Activated naive CD4-positive, alpha-beta T cell treated with anti-CD3 and anti-CD28 coated beads for 36 hours (primary cell): ENCODE measurements at regions of chr3 and their contacts with region 1.

Region 1: DNA sequence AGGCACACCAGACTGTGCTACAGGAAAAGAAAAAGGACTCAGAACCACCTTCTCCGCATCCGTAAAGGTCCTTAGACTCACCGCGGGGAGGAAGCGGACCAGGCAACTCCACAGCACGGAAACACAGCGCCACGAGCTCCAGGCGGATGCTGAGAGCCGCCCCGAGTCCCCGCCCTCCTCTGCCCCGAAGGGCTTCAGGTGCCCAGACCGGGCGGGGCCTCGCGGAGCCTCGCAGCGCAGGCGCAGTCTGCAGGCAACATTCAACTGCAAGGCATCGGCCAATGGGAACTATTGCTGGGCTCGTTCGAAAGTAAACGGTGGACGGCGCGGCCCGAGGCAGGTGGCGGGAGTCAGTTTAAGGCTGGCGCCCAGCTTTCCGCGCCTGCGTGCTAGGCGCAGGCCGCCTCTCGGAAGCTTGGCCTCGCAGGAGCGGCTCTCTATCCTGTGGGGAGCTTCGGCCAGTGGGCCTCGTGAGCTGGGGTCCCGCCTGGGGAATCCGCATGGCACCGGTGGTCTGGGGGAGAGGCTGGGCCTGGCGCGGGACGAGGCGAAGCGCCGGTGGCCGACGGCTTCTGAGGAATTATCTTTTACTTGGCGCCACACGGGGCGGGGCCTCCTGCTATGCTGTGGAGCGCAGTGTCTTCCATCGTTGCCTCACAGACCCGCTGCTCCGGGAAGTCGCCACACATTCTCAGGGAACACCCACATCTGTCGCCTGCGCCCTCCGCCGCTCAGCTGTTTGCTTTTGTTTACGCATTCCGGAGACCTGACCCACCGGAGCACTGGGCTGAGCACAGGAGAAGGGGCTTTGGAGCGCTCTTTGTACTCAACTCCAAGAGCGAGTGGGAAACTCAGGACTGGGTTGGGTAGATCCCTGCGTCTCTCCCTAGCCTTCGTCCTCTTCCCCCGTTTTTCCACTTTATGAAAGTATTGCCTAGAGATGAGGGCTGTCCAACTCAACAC is at the start of gene TRIM59:
- DNase-seq: peak; percentile 98
- H3K4me3 Mint-ChIP-seq: peak within 1 kb of the TSS; percentile 91
- H3K27ac Mint-ChIP-seq: peak within 1 kb of the TSS; percentile 90
- H3K4me1 Mint-ChIP-seq: peaks cover 26% of the 10 kb centered on the region
- H3K27me3 Mint-ChIP-seq: no peaks in the 10 kb centered on the region
- total RNA-seq, gene TRIM59: 25.8 TPM

Region 2: GRCh38 chr3:158808702-158809101 is 1641.2 kb before region 1 on chr3:
- CTCF ChIA-PET with region 1: no interaction called
- intact Hi-C with region 1: loop called (anchors 5 kb)
- DNase-seq: peak; percentile 9
- H3K4me3 Mint-ChIP-seq: no peak overlapping the region
- H3K27ac Mint-ChIP-seq: no peak overlapping the region
- H3K4me1 Mint-ChIP-seq: peaks cover 11% of the 10 kb centered on the region
- H3K27me3 Mint-ChIP-seq: no peaks in the 10 kb centered on the region

Region 3: DNA sequence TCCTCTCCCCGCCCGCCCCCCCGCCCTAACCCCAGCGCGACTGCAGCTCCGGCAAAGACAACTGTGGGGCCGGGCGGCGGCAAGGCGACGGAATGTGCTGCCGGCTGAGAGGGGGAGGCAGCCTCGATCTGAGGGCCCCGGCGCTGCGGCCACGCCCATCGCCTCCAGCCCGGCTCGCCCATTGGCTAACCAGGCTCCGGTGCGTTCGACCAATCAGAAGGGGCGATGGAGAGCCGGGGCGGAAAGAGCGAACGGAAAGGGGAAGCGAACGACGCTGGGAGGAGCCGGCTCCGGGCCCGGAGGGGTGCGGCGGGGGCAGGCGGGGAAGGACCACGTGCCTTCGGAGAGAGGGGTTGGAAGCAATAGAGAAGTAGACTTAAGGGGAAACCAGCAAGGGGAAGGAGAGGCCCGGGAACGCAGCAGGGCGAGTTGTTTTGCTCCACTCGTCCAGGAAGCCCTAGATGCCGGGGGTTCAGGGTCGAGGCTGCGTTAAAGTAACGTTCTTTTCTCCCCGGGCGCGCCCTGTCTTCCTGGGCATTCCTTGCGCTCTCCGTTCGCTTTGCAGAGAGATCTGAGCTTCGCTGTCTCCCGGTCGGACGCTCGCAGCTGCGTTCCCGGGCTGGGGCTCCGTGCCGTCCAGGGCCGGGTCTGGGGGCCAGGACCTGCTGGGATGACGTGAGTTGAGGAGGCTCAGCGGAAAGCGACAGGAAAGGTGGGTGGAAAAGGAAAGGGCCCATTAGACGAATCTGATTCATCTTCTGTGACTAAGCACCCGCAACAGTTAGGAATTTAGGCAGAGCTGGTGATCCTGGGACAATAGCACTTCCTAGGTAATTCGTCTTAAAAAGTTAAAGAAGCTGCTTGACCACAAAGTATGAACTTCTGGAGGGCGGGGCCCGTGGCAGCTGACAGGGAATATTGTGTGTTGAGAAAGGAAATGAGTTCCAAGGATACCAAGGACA is 115.8 kb after region 1 on chr3 and contains the start of gene KPNA4:
- CTCF ChIA-PET with region 1: no interaction called
- intact Hi-C with region 1: loop called (anchors 1 kb)
- DNase-seq: peak; percentile 97
- H3K4me3 Mint-ChIP-seq: peak within 1 kb of the TSS; percentile 93
- H3K27ac Mint-ChIP-seq: peak within 1 kb of the TSS; percentile 97
- H3K4me1 Mint-ChIP-seq: peaks cover 40% of the 10 kb centered on the region
- H3K27me3 Mint-ChIP-seq: no peaks in the 10 kb centered on the region
- total RNA-seq, gene KPNA4: 43.2 to 59.4 TPM

Region 4: DNA sequence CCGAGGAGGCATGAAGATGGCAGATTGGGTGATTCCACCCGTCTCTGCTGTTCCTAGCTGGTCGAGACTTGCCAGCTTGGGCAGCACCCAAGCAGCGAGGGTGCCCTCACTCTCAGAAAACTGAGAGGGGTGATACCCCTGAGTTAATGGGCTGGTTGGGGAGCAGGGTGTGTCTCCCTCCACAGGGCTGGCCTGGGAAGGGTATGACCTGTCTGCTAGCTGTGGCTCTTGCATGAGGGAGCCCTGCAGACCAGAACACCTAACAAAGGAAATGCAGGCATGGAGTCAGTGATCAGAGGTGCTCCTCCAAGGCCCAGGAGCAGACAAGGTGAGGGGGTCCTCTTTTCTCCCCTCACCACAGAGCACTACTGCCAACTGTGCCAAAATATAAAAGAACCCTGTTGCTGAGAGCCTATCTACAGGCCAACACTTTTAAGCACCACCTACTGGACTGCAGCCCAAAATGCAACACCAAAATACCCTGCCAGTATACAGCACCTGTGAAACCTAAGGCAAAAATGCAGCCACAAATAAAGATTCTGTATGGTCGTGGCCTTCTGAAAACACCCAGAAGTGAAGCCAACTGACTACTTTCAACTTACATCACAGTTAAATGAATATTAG is 270.3 kb after region 1 on chr3:
- CTCF ChIA-PET with region 1: no interaction called
- intact Hi-C with region 1: no loop called
- DNase-seq: no peak
- H3K4me3 Mint-ChIP-seq: no peak overlapping the region
- H3K27ac Mint-ChIP-seq: no peak overlapping the region
- H3K4me1 Mint-ChIP-seq: no peaks in the 10 kb centered on the region
- H3K27me3 Mint-ChIP-seq: peaks cover 3% of the 10 kb centered on the region

Region 5: DNA sequence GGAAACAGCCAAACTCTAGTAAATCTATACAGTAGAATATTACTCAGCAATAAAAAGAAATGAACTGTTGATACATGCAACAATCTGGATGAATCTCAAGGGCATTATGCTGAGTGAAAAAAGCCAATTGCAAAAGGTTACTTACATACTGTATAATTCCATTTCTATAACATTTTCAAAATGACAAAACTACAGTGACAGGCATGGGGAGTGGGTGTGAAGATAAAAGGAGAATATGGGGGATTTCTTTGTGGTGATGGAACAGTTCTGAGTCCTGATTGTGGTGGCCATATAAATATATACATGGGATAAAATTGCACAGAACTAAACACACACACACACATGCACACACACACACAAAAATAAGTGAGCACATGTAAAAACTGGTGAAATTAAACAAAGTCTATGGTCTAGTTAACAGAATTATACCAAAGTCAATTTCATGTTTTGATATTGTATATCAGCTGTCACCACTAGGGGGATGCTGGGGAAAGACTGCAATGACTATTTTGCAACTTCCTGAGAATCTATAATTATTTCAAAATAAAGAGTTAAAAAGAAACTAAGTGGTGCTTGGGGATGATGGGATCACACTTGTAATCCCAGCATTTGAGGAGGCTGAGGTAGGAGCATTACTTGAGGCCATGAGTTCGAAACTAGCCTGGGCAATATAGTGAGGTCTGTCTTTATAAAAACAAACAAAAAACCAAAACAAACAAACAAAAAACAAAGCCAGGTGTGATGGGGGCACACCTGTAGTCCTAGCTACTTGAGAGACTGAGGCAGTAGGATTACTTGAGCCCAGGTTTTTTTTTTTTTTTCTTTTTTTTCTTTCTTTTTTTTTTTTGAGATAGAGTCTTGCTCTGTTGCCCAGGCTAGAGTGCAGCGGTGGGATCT is 855.4 kb after region 1 on chr3:
- CTCF ChIA-PET with region 1: no interaction called
- intact Hi-C with region 1: no loop called
- DNase-seq: peak; percentile 12
- H3K4me3 Mint-ChIP-seq: no peak overlapping the region
- H3K27ac Mint-ChIP-seq: no peak overlapping the region
- H3K4me1 Mint-ChIP-seq: peaks cover 22% of the 10 kb centered on the region
- H3K27me3 Mint-ChIP-seq: no peaks in the 10 kb centered on the region